ENCODE measurements at regions of chr13 and their contacts with region 1.

Region 1: GRCh38 chr13:27826379-27827353 is 34.4 kb downstream of the GSX1 start:
- DNase-seq: peak; percentile 38 to 64 (median 53)
- H3K4me3 ChIP-seq: no peak overlapping the region
- H3K4me3 Mint-ChIP-seq: peak overlapping the region in 1 of 2 donors; percentile 51
- H3K27ac ChIP-seq: no peak overlapping the region
- H3K27ac Mint-ChIP-seq: no peak overlapping the region
- H3K4me1 ChIP-seq: peaks cover 4 to 12% of the 10 kb centered on the region in 2 donors
- H3K4me1 Mint-ChIP-seq: peaks cover 12% of the 10 kb centered on the region
- H3K27me3 ChIP-seq: peaks cover 38 to 74% of the 10 kb centered on the region in 2 donors
- H3K27me3 Mint-ChIP-seq: peaks cover 59 to 81% (median 77%) of the 10 kb centered on the region in 3 donors
- CTCF ChIP-seq: peak; percentile 95

Region 2: DNA sequence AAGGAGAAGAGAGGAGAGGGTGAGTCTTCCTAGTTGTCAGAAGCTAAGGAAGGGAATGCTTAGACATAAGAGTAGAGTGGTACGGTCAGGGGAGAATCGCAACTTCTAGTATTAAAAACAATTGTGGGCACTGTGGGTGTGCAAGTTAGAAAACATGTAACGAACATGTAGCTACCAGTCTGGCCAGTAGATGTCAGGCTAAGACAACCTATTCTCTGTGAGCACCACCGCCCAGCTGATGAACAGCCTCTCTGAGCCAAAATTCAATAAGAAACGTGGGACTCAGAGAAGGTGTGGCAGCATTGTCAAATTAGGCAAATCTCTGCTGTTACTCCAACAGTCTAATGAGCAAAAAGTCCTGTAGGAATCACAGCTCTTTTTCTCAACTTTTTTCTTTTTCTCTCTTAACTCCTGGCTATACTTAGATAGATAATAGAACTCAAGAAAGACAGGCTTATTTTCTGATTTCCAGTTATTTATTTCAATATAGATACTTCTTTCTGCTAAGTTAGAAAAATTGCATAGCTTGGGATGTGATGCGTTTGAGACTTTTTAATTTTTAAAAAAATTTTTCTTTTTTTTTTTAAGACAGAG is 841.3 kb before region 1 on chr13:
- intact Hi-C with region 1: loop called (anchors 5 kb)
- DNase-seq: peak; percentile 66 to 79 (median 76)
- H3K4me3 ChIP-seq: no peak overlapping the region
- H3K4me3 Mint-ChIP-seq: no peak overlapping the region
- H3K27ac ChIP-seq: no peak overlapping the region
- H3K27ac Mint-ChIP-seq: peak overlapping the region in 4 of 7 donors; percentile 0 to 73 (median 52)
- H3K4me1 ChIP-seq: peaks cover 14 to 15% of the 10 kb centered on the region in 2 donors
- H3K4me1 Mint-ChIP-seq: peaks cover 18% of the 10 kb centered on the region
- H3K27me3 ChIP-seq: no peaks in the 10 kb centered on the region
- H3K27me3 Mint-ChIP-seq: peaks cover 0 to 2% (median 1%) of the 10 kb centered on the region in 3 donors
- CTCF ChIP-seq: peak; percentile 86

Region 3: DNA sequence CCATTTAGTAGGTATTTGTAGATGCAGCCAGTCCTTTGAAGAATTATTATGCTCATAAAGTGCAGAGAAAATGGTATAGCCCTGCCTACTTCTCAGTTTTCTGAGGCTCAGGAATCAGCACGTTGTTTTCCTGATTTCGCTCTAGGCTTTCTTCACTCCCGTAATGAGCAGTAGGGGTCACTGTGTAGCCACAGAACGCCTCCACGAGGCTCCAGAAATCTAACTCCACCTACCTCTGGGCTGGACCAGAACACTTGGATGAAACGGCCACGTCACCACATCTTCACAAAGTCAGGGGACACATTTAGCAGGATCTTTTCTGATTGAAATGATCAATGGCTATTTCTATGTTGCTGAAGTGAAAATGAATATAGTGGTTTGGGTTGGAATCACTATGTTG is 452.0 kb before region 1 on chr13:
- intact Hi-C with region 1: loop called (anchors 2 kb)
- DNase-seq: peak; percentile 64 to 69 (median 65)
- H3K4me3 ChIP-seq: no peak overlapping the region
- H3K4me3 Mint-ChIP-seq: no peak overlapping the region
- H3K27ac ChIP-seq: no peak overlapping the region
- H3K27ac Mint-ChIP-seq: peak overlapping the region in 1 of 7 donors; percentile 38
- H3K4me1 ChIP-seq: no peaks in the 10 kb centered on the region
- H3K4me1 Mint-ChIP-seq: peaks cover 5% of the 10 kb centered on the region
- H3K27me3 ChIP-seq: peaks cover 0 to 5% of the 10 kb centered on the region in 2 donors
- H3K27me3 Mint-ChIP-seq: peaks cover 1 to 14% (median 4%) of the 10 kb centered on the region in 3 donors
- CTCF ChIP-seq: peak; percentile 72

Region 4: GRCh38 chr13:27533155-27533643 is 293.5 kb before region 1 on chr13:
- intact Hi-C with region 1: loop called (anchors 10 kb)
- DNase-seq: peak; percentile 63 to 71 (median 68)
- H3K4me3 ChIP-seq: peak overlapping the region in 2 of 3 experiments; percentile 20 to 64
- H3K4me3 Mint-ChIP-seq: peak overlapping the region; percentile 72 to 85
- H3K27ac ChIP-seq: no peak overlapping the region
- H3K27ac Mint-ChIP-seq: peak overlapping the region in 2 of 7 donors; percentile 30 to 73
- H3K4me1 ChIP-seq: peaks cover 4 to 8% of the 10 kb centered on the region in 2 donors
- H3K4me1 Mint-ChIP-seq: peaks cover 6% of the 10 kb centered on the region
- H3K27me3 ChIP-seq: no peaks in the 10 kb centered on the region
- H3K27me3 Mint-ChIP-seq: peaks cover 1 to 7% (median 6%) of the 10 kb centered on the region in 3 donors
- CTCF ChIP-seq: peak; percentile 96

Region 5: DNA sequence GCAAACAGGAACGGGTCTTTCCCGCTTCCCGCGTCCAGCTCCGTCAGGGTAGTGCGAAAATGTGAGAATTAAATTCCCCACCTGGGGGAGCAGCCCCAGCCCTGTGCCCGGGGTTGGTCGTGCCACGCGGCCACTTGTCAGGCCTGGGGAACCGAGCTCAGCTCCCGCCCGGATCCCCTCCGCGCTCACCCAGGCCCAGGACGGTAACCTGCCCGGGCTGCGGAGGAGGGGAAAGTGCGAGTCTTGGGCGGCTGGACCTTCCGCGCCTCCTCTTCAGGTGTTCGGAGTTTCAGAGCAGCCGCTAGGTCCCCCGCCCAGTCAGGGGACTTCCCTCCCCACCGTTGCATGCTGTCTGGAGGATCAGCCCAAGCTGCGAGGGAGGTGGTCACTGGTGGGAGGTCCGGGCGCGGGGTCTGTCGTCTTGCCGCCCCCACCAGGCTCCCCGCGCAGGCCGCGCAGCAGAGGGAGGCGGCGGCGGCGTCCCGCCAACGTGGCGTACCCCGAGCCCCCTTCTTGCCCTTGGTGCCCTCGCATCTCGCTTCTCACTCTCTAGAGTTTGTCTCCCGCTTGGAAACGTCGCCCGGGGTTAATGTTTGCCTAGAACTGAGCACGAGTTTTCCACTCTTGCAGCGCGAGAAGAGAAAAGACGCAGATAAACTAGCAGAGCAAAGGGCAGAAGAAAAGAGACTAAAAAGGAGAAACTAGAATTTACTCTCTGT is 153.8 kb after region 1 on chr13:
- intact Hi-C with region 1: loop called (anchors 2 to 5 kb)
- DNase-seq: no peak
- H3K4me3 ChIP-seq: no peak overlapping the region
- H3K4me3 Mint-ChIP-seq: peak overlapping the region; percentile 58 to 81
- H3K27ac ChIP-seq: no peak overlapping the region
- H3K27ac Mint-ChIP-seq: peak overlapping the region in 1 of 7 donors; percentile 61
- H3K4me1 ChIP-seq: peaks cover 8 to 12% of the 10 kb centered on the region in 2 donors
- H3K4me1 Mint-ChIP-seq: peaks cover 25% of the 10 kb centered on the region
- H3K27me3 ChIP-seq: peaks cover 67 to 78% of the 10 kb centered on the region in 2 donors
- H3K27me3 Mint-ChIP-seq: peaks cover 74 to 86% (median 80%) of the 10 kb centered on the region in 3 donors
- CTCF ChIP-seq: no peak

Region 6: GRCh38 chr13:27988520-27988919 is 161.9 kb after region 1 on chr13 and contains the start of gene URAD:
- intact Hi-C with region 1: loop called (anchors 2 to 5 kb)
- DNase-seq: no peak
- H3K4me3 ChIP-seq: no peak within 1 kb of the TSS
- H3K4me3 Mint-ChIP-seq: no peak within 1 kb of the TSS
- H3K27ac ChIP-seq: no peak within 1 kb of the TSS
- H3K27ac Mint-ChIP-seq: no peak within 1 kb of the TSS
- H3K4me1 ChIP-seq: no peaks in the 10 kb centered on the region
- H3K4me1 Mint-ChIP-seq: no peaks in the 10 kb centered on the region
- H3K27me3 ChIP-seq: peaks cover 0 to 2% of the 10 kb centered on the region in 2 donors
- H3K27me3 Mint-ChIP-seq: peaks cover 5 to 8% (median 8%) of the 10 kb centered on the region in 3 donors
- CTCF ChIP-seq: no peak
- polyA plus RNA-seq, gene URAD: 0.12 TPM in 1 of 3 donors, not detected in the others

Measured in CD14-positive monocyte (primary cell).